GM10248 (cell line): ENCODE measurements at regions of chr17 and their contacts with region 1.

Region 1: DNA sequence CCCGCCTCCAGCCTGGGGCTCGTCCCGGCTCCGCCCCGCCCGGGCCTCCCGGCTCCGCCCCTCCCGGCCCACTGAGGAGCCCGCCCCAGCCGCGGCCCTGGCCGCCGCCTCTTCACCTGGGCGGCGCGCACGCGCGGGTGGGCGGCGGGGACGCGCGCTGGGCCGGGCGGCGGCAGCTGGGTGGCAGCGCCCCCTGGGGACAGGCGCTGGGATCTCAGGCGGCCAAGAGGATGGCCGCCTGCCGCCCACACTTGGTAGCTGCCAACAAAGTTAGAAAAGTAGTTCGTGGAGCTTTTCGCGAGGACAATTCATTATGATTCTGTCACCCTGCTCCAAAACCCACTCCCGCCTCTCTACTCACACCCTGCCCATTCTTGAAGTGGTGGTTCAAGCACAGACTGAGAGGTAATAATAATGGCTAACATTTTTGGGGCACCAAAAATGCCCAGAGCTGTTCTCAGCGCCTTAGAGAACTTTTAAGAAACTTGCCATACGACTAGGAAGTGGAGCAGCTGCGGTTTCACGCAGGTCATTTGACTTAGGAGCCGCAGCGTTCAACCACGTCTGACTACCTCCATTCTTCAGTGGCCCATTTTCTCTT is 340 bp upstream of the MYO1D start:
- DNase-seq: peak; percentile 96
- CTCF ChIP-seq: peak; percentile 89

Region 2: DNA sequence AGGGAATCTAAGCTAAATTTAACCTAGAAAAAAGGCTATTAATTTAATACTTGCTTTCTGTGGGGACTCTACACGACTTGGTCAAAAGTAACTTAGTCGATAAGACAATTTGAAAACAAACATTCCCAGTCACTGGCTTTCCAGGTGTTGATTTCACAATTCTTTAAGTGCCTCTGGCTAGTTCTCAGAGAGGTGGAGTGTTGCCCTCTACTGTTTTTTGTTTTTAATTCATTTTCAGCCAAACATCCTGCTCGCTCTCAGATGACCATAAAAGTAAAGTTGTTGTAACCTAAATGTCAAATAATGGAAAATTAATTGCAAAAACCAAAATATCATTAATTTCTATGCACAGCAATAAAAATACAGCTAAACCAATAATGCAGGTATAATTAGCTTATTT is 107.4 kb before region 1 on chr17:
- CTCF ChIA-PET with region 1: interaction called, 204 read pairs
- POLR2A ChIA-PET with region 1: no interaction called
- DNase-seq: no peak
- CTCF ChIP-seq: peak; percentile 9

Region 3: GRCh38 chr17:32803544-32803943 is 73.7 kb before region 1 on chr17:
- CTCF ChIA-PET with region 1: interaction called, 64 read pairs
- POLR2A ChIA-PET with region 1: no interaction called
- DNase-seq: no peak
- CTCF ChIP-seq: no peak

Region 4: DNA sequence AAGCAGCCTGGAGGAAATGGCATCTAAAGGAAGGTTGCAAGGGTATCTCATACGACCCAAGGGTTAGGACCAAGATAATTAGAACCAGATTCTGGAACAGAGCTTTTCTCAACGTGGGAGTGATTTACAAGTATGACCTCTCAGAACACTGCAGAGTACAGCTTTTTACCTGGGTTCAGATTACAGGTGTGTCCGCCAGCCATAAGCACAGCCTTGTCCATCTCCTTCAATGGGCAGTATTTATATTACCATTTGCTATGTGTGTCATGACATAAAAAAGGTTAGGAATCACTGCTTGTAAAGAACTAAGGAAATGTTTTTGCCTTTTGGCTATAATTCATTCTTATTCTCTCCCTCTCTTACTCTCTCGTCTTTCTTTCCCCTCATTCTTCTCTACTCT is 37.0 kb before region 1 on chr17:
- CTCF ChIA-PET with region 1: interaction called, 120 read pairs
- POLR2A ChIA-PET with region 1: no interaction called
- DNase-seq: no peak
- CTCF ChIP-seq: no peak

Region 5: DNA sequence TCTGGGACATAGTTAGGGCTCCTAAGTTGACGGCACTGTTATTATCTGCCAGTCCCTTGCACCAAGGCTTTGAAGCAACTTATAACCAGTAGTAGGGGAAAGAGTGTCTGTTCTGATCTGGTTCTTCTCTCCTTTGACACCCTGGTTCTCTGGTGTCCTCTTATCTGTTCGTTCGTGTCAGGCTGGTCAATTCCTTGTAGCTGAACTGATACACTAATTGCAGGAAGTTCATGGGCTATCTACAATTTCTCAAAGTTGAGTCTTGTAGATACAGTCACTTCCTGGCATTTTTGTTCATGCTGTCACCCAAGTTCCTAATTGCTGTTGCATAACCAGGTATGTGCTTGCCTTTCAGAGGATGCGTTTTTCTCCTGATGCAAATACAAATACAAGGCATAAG is 17.0 kb after region 1 on chr17:
- CTCF ChIA-PET with region 1: interaction called, 27 read pairs
- POLR2A ChIA-PET with region 1: no interaction called
- DNase-seq: no peak
- CTCF ChIP-seq: no peak